Activated CD4-positive, alpha-beta memory T cell treated with anti-CD3 and anti-CD28 coated beads for 36 hours (primary cell): ENCODE measurements at regions of chr2 and their contacts with region 1.

Region 1: DNA sequence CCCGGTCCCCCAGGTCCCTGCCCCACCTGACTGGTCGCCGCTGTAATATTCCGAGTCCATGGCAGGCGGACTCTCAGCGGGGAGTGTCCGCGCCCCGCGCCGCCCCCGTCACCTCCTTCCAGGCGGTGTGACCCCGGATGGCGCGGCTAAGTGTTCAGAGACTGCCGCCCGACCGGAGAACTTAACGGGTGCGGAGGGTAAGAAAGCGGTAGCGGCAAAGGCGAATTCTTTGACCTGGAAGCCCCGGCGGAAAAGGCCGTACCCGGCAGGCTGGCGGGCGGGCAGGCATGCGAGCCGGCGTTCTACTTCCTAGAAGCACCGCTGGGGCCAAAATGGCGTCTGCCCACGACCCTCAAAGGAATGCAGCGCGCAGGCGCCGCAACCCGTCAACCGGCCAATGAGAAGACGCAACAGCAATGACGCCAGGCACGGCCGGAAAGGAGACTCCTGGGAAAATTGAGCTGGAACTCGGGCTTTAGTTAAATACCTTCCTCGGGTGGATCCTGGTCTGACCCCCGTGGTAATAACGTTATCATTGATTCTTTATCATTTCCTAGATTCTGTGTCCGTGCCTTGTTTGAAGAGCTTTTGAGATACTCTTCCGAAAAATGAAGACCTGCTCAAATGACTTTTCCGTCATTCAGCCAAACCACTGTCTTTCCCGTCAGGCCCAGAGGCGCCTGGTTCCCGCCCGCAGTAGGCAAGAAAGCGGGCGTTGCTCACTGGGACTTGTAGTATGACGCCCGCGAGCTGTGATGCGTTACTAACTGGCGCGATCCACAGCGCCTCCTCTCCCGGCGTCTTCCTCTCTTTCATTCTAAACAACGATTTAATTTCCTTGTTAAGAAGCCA is at the start of gene IWS1:
- DNase-seq: peak; percentile 96
- H3K4me3 Mint-ChIP-seq: peak within 1 kb of the TSS; percentile 92
- H3K27ac Mint-ChIP-seq: peak within 1 kb of the TSS; percentile 90
- H3K4me1 Mint-ChIP-seq: peaks cover 34% of the 10 kb centered on the region
- H3K27me3 Mint-ChIP-seq: no peaks in the 10 kb centered on the region
- total RNA-seq, gene IWS1: 57.0 to 57.1 TPM

Region 2: DNA sequence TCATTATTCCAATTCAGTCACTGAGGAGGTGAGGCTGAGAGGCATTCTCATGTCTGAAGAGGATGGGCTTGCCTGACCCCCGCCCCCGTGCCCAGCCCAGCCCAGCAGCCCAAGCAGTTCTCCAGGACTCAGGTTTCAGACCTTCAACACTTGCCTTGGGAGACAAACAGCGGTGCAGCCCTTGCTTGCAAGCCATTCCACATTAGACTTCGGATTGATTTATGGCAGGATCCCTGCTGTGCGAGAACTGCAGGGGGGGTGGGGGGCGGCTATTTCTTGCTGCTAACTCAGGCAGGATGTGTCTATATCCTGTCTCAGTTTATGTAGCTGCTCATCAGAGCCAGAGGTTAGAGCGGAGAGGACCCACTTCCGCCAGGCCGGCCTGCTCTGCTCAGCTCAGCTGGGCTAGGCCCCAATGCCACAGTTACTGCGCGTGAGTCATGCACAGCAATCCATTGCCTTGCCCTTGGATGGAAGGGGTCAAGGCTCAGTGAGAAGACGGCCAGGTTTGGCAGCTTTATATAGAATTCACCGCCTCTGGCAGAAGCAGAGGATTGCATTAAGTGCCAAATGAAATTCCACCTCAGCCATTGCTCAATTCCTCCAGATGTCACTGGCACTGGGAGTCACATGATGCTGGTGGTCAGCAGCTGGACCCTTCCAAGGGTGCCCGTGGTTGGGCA is 868.6 kb before region 1 on chr2:
- CTCF ChIA-PET with region 1: no interaction called
- POLR2A ChIA-PET with region 1: no interaction called
- intact Hi-C with region 1: loop called (anchors 5 kb)
- DNase-seq: peak; percentile 89
- H3K4me3 Mint-ChIP-seq: peak overlapping the region; percentile 91
- H3K27ac Mint-ChIP-seq: peak overlapping the region; percentile 97
- H3K4me1 Mint-ChIP-seq: peaks cover 52% of the 10 kb centered on the region
- H3K27me3 Mint-ChIP-seq: no peaks in the 10 kb centered on the region

Region 3: DNA sequence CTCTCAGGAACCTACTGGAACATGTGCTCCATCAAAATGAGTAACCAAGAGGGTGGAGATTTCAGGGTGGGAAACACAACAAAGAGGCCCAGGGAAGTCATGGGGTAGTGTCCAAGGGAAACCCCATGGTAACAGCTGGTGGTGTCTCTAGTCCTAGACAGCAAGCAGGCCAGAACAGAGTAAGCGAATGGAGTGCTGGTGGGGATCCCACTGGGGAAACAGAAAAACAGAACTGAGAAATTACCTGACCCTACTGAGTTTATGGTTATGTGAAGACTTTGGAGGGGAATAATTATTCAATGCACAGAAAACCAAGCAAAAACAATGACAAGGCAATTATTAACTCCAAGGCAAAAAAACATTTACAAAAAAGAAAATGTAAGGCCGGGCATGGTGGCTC is 249.3 kb before region 1 on chr2:
- CTCF ChIA-PET with region 1: no interaction called
- POLR2A ChIA-PET with region 1: no interaction called
- intact Hi-C with region 1: no loop called
- DNase-seq: no peak
- H3K4me3 Mint-ChIP-seq: no peak overlapping the region
- H3K27ac Mint-ChIP-seq: no peak overlapping the region
- H3K4me1 Mint-ChIP-seq: peaks cover 17% of the 10 kb centered on the region
- H3K27me3 Mint-ChIP-seq: no peaks in the 10 kb centered on the region

Region 4: DNA sequence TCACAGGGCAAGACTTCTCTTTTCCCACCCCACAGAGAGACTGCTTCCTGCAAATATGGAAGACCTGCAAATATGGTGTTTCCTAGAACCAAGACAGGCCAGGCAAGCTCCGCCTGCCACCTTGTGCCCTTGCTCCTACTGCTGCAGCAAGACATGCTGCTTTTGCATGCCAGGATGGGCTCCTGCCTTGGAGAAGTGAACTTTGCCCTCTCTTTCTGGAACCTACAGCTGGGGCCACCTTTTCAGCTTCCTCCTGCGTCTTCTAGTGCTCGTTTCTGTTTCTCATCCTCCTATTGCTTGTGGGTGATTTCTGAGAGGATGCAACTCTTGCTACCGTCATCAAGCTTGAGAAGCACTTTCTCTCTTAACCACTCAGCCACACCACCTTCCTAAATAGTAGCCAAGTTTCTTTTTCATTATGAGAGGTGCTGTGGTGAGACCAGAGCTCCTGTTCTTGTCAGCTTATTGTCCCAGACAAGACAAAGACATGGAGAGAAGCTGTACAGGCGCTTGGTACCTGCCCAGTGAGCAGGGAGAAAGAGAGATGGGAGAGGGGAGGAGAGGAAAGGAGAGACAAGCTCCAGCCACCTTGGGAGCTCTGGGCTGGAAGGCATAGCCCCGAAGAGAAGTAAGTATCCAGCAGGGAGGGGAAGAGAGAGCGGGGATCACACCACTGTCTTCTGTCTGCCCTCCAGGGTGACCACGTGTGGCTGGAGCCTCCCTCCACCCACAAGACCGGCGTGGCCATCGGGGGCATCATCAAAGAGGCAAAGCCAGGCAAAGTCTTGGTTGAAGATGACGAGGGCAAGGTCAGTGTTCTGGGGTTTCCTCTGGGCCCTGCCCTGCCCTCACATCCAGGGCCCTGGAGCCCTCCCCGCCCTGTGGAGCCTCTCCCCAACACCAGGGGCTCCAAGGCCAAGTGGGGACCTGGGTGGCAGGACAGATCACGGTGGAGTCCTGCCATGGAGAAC is 37.4 kb after region 1 on chr2:
- CTCF ChIA-PET with region 1: no interaction called
- POLR2A ChIA-PET with region 1: interaction called, 4 read pairs
- intact Hi-C with region 1: loop called (anchors 1 kb)
- DNase-seq: peak; percentile 52
- H3K4me3 Mint-ChIP-seq: no peak overlapping the region
- H3K27ac Mint-ChIP-seq: no peak overlapping the region
- H3K4me1 Mint-ChIP-seq: peaks cover 16% of the 10 kb centered on the region
- H3K27me3 Mint-ChIP-seq: peaks cover 16% of the 10 kb centered on the region

Region 5: DNA sequence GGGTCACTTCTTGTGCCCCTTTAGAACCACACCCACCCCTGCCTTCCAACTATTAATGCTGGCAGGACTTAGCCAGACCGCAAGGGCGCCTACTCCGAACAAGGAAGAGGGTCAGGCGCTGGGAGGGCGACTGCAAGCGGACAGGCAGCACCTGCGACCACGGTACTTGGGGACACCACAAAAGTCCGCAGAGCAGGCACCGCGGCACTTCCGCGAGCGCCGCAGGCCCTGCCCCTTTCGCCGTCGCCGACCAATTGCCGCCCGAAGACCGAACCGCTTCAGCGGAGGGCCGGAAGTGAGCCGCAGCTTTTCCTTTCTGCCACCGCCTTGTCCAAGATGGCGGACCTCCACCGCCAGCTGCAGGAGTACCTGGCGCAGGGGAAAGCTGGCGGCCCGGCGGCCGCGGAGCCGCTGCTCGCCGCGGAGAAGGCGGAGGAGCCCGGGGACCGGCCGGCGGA is 174.8 kb after region 1 on chr2 and contains the start of gene SFT2D3:
- CTCF ChIA-PET with region 1: no interaction called
- POLR2A ChIA-PET with region 1: interaction called, 3 read pairs
- intact Hi-C with region 1: loop called (anchors 1 kb)
- DNase-seq: peak; percentile 95
- H3K4me3 Mint-ChIP-seq: peak within 1 kb of the TSS; percentile 92
- H3K27ac Mint-ChIP-seq: peak within 1 kb of the TSS; percentile 95
- H3K4me1 Mint-ChIP-seq: peaks cover 37% of the 10 kb centered on the region
- H3K27me3 Mint-ChIP-seq: no peaks in the 10 kb centered on the region
- total RNA-seq, gene SFT2D3: 3.1 to 3.6 TPM

Region 6: GRCh38 chr2:128027801-128028667 is 501.7 kb after region 1 on chr2 and contains the start of gene SAP130:
- CTCF ChIA-PET with region 1: no interaction called
- POLR2A ChIA-PET with region 1: no interaction called
- intact Hi-C with region 1: loop called (anchors 1 kb)
- DNase-seq: peak; percentile 99
- H3K4me3 Mint-ChIP-seq: peak within 1 kb of the TSS; percentile 97
- H3K27ac Mint-ChIP-seq: peak within 1 kb of the TSS; percentile 80
- H3K4me1 Mint-ChIP-seq: peaks cover 16% of the 10 kb centered on the region
- H3K27me3 Mint-ChIP-seq: no peaks in the 10 kb centered on the region
- total RNA-seq, gene SAP130: 21.8 to 25.7 TPM